Endothelial cell of umbilical vein (primary cell): ENCODE measurements at regions of chr2 and their contacts with region 1.

Region 1: GRCh38 chr2:71423817-71424420 is 29.4 kb upstream of the DYSF start:
- DNase-seq: peak; percentile 91
- H3K4me3 ChIP-seq: peak overlapping the region in 1 of 3 experiments; percentile 13
- H3K27ac ChIP-seq: peak overlapping the region; percentile 78
- H3K4me1 ChIP-seq: peaks cover 37% of the 10 kb centered on the region
- H3K27me3 ChIP-seq: no peaks in the 10 kb centered on the region
- CTCF ChIP-seq: peak in 1 of 2 donors; percentile 15
- POLR2A ChIP-seq: peak; percentile 52

Region 2: DNA sequence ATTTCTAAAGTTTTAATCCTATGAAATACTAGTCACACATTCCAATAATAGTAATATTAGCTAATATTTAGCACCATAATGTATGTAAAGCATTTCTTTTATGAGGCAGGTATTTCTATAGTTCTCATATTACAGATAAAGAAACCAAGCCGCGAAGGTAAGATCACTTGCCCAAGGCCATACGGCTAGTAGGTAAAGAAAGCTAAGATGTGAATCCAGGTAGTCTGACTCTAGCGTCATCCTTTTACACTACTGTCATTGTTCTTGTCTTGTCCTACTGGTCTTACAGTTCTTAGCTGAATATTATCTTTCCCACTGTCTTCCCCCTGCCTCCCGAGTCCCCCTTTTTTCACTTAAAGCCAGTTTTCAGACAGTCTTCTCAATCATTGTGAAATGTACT is 23.4 kb after region 1 on chr2:
- CTCF ChIA-PET with region 1: interaction called, 4 read pairs
- POLR2A ChIA-PET with region 1: no interaction called
- dilution Hi-C with region 1: no loop called
- intact Hi-C with region 1: loop called (anchors 2 kb)
- DNase-seq: no peak
- H3K4me3 ChIP-seq: no peak overlapping the region
- H3K27ac ChIP-seq: no peak overlapping the region
- H3K4me1 ChIP-seq: peaks cover 2% of the 10 kb centered on the region
- H3K27me3 ChIP-seq: no peaks in the 10 kb centered on the region
- CTCF ChIP-seq: no peak
- POLR2A ChIP-seq: no peak

Region 3: DNA sequence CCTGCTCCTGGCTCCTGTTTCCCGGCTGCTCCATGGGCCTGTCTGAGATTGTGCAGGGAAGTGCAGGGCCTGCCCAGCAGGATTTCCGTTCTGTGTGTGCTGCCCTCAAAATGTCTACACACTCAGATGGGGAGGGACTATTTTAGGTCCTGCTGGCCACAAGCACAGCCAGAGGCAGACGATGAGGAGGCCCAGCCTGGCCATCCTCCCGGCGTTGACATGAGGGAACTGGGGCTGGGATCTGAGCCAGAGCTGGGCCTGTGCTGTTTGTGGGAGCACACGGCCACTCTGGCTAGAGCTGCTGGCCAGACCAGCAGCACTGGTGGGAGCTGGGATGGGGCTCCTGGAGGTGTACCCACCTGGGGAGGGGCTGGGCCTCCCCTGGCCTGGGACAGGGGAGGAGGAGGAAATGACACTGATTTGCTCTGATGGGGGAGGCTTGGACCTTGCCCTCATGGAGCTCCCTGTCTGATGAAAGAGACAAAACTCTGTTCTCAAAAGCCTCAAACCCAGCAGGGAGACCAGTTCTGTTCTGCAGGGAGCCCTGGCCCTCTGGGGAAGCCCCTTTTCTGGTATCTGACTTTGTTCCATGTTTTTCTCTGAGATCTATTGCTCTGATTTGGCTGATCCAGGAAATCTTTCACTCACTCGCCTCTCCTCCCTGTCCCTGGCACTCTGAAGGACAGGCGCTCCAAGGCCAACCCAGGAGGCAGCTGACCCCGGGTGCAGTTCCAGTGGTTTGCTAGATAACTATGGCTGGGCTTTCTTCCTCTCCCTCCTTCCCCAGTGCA is 191.3 kb after region 1 on chr2:
- CTCF ChIA-PET with region 1: no interaction called
- POLR2A ChIA-PET with region 1: no interaction called
- dilution Hi-C with region 1: no loop called
- intact Hi-C with region 1: no loop called
- DNase-seq: peak; percentile 58
- H3K4me3 ChIP-seq: no peak overlapping the region
- H3K27ac ChIP-seq: peak overlapping the region; percentile 36
- H3K4me1 ChIP-seq: peaks cover 13% of the 10 kb centered on the region
- H3K27me3 ChIP-seq: no peaks in the 10 kb centered on the region
- CTCF ChIP-seq: no peak
- POLR2A ChIP-seq: no peak